ENCODE measurements at regions of chr1 and their contacts with region 1.

Region 1: DNA sequence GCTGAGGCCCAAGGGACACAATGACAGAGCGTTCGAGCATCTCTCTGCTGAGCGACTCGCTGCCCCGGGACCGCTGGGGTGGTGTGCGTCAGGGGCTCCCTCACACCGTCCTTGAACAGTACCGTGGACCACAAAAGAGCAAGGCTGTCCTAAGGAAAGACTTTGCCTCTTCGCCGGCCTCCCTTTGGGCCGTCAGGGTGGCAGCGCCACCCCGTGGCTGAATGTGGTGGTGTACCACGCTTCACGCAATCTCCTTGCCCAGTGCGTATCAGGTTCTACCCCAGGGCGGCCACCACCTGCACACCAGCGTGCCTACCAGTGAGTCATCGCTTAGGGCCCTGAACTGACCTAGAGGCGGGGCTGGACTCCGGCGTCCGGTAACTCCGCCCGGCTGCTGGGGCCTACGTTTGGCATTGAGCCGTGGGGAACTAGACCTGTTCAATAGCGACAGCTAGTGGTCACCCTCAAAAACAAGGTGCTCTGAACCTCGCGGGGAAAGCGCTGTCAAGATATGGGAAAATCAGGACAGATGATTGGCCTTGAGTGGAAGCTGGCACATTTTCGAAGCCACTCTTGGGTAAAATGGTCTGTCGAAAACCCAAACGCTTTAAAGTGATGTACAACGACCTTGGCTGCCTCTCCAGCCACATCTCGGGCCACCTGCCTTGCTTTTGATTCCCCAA is 8.1 kb upstream of the TRAF3IP3 start:
- H3K4me3 Mint-ChIP-seq: peak overlapping the region; percentile 80
- H3K27ac Mint-ChIP-seq: peak overlapping the region; percentile 77
- H3K4me1 Mint-ChIP-seq: peaks cover 73% of the 10 kb centered on the region
- H3K27me3 Mint-ChIP-seq: no peaks in the 10 kb centered on the region

Region 2: DNA sequence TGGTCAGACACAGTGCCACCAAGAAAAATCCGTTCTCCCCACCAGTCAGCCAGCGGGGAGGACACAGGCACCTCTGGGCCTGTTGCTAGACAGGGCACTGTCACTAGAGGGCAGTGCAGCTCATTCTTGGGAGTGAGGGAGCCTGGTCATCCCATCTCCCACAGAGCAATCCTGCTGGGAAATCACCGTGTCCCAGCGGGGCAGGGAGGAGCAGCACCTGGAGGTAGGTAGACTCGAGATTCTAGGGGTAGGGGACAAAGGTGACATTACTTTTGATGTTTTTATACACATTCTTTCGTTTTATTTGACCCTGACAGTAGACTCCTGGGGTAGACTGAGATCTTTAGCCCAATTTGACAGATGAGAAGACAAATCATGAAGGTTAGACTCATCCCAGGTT is 170.9 kb before region 1 on chr1:
- intact Hi-C with region 1: loop called (anchors 1 kb)
- H3K4me3 Mint-ChIP-seq: no peak overlapping the region
- H3K27ac Mint-ChIP-seq: no peak overlapping the region
- H3K4me1 Mint-ChIP-seq: peaks cover 5% of the 10 kb centered on the region
- H3K27me3 Mint-ChIP-seq: peaks cover 39% of the 10 kb centered on the region

Region 3: DNA sequence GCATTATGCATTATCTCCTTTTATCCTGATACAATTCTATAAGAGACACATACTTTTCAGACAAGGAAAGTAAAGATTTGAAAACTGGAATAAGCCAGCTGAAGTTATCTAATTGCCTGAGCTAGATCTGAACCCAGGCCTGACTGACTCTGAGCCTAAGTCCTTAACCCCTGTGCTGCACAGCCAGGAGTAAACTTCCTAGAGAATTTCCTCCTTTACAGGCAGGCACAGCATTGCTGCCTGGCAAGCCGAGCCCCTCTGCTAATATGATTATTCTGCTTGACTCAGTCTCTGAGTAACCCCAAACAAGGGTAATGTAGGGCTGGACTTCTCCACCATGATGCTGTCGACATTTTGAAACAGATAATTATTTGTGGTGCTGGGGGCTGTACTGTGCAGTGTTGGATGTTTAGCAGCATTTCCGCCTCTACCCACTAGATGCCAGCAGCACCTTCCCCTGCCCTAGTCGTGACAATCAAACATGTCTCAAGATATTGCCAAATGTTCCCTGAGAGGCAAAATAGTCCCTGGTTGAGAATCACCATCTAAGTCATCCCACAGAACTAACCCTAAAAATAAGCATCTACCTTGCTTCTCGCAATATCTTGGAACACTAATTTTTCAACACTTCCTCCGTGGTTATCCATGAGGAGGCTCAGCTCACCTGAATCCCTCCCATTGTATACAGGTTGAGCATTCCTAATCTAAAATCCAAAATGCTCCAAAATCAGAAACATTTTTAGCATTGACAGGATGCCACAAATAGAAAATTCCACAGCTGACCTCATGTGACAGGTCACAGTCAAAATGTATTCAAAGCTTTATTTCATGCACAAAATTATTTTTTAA is 145.7 kb before region 1 on chr1:
- intact Hi-C with region 1: loop called (anchors 1 kb)
- H3K4me3 Mint-ChIP-seq: no peak overlapping the region
- H3K27ac Mint-ChIP-seq: no peak overlapping the region
- H3K4me1 Mint-ChIP-seq: no peaks in the 10 kb centered on the region
- H3K27me3 Mint-ChIP-seq: peaks cover 19% of the 10 kb centered on the region

Region 4: GRCh38 chr1:209651148-209651547 is 96.6 kb before region 1 on chr1:
- intact Hi-C with region 1: loop called (anchors 5 kb)
- H3K4me3 Mint-ChIP-seq: no peak overlapping the region
- H3K27ac Mint-ChIP-seq: peak overlapping the region; percentile 83
- H3K4me1 Mint-ChIP-seq: peaks cover 90% of the 10 kb centered on the region
- H3K27me3 Mint-ChIP-seq: peaks cover 16% of the 10 kb centered on the region